ENCODE measurements at regions of chr3 and their contacts with region 1.

Region 1: DNA sequence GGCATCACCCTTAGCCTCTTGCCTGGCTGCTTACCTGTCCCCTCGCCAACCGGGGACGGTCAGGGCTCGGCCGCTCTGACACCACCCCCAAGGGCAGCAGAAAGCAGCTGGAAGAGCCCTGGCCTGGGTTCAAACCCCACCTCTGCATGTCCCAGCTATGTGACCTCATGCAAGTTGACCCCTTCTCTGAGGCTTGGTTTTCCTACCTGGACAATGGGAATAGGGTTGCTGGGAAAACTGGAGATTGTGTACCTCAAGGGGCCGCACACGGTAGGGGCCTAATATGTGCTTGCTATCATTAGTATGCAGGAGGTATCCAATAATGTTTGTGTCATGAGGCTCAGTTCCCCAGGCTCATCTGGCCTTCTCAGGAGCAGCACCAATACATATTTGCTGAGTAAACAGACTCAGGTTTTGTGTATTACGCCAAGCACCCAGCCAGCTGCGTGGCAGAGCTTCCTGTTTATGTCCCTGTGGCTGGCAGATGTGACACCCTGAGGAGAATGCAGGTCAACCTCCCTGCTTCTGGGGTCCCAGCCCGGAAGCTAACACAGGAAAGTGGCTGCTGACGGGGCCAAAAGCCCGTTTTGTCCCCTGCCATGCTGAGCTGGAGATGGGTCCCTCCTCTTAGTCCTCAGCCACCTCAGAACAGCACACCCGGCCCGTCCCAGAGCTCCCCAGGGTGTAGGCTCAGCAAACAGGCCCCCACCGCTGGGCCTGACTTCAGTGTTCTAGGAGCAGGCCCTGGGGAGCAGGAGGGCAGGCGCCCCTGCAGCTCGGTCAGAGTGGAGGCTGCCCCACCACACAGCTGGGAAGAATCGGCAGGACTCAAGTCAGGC is 29.7 kb downstream of the PLXND1 start:
- DNase-seq: peak; percentile 64 to 70 (median 68)
- H3K4me3 ChIP-seq: no peak overlapping the region
- H3K4me3 Mint-ChIP-seq: peak overlapping the region in 1 of 2 donors; percentile 63
- H3K27ac ChIP-seq: peak overlapping the region; percentile 59 to 81
- H3K27ac Mint-ChIP-seq: peak overlapping the region; percentile 70 to 87 (median 82)
- H3K4me1 ChIP-seq: peaks cover 35 to 37% of the 10 kb centered on the region in 2 donors
- H3K4me1 Mint-ChIP-seq: peaks cover 41% of the 10 kb centered on the region
- H3K27me3 ChIP-seq: no peaks in the 10 kb centered on the region
- H3K27me3 Mint-ChIP-seq: peaks cover 0 to 3% (median 0%) of the 10 kb centered on the region in 3 donors
- CTCF ChIP-seq: no peak

Region 2: DNA sequence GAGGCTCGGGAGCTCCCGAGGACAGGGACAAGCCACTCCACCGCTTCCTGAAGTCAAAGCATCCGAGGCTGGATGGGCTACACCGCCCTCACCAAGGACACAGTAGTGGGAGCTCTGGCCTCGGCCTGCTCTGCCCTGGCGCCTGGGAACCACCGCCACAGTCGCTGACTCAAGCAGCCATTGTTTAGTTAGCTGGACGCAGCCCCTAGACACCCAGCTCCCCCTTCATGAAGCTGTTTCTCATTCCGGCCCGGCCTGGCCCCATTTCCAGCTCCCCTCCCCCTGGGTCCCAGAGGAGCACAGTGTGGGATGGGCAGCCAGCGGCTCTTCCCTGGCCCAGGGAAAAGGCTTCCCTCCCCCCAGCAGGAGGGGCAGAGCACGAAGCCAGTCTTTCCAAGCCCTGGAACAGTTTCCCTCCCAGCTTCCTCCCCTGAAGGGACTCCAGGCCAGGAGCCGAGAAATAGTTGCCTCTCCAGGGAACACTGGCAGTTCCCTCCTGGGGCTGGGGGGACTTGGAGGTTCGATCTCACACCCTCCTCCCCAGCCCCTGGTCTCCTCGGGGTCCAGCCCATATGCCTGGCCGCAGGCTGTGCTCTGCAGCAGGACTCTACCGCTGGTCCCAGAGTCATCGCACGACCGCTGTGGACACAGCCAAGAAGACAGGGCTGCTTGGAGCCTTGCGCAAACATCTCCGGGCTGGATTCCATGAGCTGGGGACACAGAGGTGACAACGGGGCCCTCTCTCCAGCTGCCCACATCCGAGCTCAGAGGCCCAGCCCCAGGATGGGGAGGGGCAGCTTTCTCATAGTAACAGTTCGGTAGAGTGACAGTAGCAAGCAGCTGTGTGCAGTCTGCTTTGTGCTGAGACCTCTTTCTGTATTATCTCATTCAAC is 19.7 kb after region 1 on chr3:
- intact Hi-C with region 1: loop called in 1 of 2 experiments (anchors 2 kb)
- DNase-seq: peak; percentile 67 to 78 (median 69)
- H3K4me3 ChIP-seq: peak overlapping the region in 1 of 3 experiments; percentile 41
- H3K4me3 Mint-ChIP-seq: peak overlapping the region; percentile 50 to 71
- H3K27ac ChIP-seq: peak overlapping the region; percentile 60 to 90
- H3K27ac Mint-ChIP-seq: peak overlapping the region; percentile 60 to 85 (median 83)
- H3K4me1 ChIP-seq: peaks cover 97 to 100% of the 10 kb centered on the region in 2 donors
- H3K4me1 Mint-ChIP-seq: peaks cover 93% of the 10 kb centered on the region
- H3K27me3 ChIP-seq: no peaks in the 10 kb centered on the region
- H3K27me3 Mint-ChIP-seq: peaks cover 0 to 2% (median 0%) of the 10 kb centered on the region in 3 donors
- CTCF ChIP-seq: no peak

Region 3: GRCh38 chr3:129616713-129617112 is 40.0 kb after region 1 on chr3:
- intact Hi-C with region 1: loop called (anchors 5 kb)
- DNase-seq: peak; percentile 87 to 99 (median 91)
- H3K4me3 ChIP-seq: peak overlapping the region in 1 of 3 experiments; percentile 19
- H3K4me3 Mint-ChIP-seq: peak overlapping the region in 1 of 2 donors; percentile 64
- H3K27ac ChIP-seq: peak overlapping the region; percentile 80 to 89
- H3K27ac Mint-ChIP-seq: peak overlapping the region; percentile 92 to 98 (median 95)
- H3K4me1 ChIP-seq: peaks cover 77 to 86% of the 10 kb centered on the region in 2 donors
- H3K4me1 Mint-ChIP-seq: peaks cover 73% of the 10 kb centered on the region
- H3K27me3 ChIP-seq: no peaks in the 10 kb centered on the region
- H3K27me3 Mint-ChIP-seq: no peaks in the 10 kb centered on the region
- CTCF ChIP-seq: no peak

Measured in CD14-positive monocyte (primary cell).